Right ventricle myocardium inferior (tissue), 1 donor: ENCODE measurements at regions of chr9 and their contacts with region 1.

Region 1: DNA sequence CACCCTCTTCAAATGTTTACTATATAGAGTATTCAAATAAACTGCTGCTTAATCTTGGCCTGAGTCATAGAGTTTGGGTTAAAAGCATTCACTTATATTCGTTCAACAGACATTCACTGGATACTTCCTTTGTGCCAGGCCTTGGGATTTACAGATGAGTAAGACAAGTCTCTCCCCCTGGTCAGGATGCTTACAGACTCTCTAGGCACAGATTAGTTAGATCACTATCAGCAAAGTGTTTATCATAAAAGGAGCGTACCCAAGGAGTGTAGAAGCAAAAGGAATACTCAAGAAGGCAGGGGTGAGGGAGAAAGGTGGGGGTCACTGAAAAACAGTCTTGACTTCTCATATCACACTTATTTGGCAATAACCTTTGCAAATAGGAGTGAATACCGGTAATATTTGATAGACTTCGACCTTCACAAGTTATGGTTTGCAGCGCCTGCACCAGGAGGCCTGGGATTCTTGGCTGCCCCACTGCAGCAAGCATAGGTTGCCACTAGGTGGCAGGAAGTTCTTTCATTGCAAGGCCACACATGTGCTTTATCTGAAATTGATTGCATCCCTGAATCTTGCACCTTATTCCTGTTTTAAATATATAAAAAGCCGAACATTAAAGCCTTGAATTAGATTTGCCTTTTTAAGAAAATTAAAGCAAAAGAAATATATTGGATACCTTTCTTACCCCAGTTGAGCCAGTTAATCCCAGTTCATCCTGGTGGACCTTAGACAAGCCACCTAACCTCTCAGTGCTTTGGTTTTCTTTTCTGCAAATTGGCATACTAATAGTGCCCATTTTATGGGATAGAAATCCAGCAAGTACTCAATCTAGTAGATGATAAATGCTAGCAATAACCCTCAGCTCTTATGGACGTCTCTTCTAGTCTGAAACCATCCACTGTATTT is 6.5 kb upstream of the TRMT10B start:
- DNase-seq: no peak
- ATAC-seq: peak; percentile 57

Region 2: DNA sequence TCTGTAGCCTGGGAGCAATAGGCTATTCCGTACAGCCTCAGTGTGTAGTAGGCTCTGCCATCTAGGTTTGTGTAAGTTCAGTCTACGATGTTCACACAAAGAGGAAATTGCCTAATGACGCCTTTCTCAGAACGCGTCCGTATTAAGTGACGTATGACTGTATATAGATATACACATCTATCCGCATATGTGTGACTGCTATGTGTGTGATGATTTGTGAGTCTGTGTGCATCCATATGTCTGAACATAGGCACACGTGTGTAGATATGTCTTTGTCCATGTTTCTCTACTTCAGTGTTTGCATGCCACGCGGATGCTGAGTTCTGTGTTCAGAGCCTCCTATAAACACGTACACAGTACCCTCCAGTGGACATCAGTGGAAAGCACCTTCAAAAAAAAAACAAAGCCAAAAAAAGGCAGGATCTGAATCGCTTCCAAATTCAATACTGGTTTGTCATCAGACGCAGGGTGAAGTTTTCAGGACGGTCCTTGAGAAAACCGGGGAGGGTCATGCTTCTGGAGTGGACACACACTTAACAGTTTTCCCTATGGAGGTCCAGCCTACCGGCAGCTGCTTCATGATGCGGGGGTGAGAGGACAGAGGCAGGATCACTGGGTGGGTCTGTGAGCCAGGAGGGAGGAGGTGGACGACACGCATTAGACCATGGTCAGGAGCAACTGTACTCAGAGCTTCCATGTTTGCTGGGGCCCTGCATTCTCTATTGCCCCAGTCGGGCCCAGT is 615.9 kb after region 1 on chr9:
- intact Hi-C with region 1: loop called (anchors 2 kb)
- DNase-seq: no peak
- ATAC-seq: peak; percentile 78

Region 3: DNA sequence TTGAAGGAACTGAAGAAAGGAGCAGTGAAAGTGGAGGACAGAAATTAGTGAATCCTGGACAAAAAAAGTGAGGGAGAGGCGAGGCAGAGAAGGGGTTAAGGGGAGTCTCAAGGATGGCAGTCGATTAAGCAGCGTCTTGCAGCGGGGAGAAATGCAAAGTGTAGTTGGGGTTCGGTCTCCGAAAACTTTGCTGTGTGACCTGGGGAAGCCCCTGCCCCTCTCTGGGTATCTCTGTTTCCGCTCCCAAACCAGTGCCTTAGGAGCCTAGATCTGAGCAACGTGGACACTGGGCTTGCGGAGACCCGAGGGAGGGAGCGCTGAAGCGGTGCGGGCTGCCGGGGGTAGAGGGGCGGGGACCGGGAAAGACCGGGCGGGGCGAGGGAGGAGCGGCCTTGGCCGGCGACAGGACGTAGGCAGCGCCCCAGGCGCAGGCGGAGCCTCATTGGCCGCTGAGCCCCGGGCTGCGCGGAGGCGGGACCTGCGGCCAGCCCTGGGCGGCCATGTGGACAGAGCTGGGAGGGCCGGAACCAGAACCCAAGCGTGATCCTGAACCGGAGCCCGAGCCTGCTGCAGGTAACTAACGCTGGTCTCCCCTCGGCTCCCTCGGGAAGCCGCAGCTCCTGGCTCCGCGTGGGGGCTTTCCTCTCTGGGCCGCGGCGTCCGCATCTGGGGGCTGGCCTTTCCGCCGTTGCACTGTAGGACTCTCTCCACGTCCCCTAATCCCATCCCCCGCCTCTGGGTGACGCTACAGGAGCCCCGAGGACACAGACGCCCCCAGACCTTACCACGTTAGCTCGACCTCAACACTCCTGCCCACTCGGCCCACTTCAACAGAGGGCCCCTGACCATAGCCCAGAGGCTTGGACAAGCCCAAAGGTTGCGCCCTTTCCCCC is 645.4 kb after region 1 on chr9 and contains the start of gene ALDH1B1:
- intact Hi-C with region 1: loop called (anchors 10 kb)
- DNase-seq: peak; percentile 93
- ATAC-seq: peak; percentile 100
- total RNA-seq, gene ALDH1B1: 18.4 TPM